Ovary (tissue), 10 donors: ENCODE measurements at regions of chr3 and their contacts with region 1.

Region 1: DNA sequence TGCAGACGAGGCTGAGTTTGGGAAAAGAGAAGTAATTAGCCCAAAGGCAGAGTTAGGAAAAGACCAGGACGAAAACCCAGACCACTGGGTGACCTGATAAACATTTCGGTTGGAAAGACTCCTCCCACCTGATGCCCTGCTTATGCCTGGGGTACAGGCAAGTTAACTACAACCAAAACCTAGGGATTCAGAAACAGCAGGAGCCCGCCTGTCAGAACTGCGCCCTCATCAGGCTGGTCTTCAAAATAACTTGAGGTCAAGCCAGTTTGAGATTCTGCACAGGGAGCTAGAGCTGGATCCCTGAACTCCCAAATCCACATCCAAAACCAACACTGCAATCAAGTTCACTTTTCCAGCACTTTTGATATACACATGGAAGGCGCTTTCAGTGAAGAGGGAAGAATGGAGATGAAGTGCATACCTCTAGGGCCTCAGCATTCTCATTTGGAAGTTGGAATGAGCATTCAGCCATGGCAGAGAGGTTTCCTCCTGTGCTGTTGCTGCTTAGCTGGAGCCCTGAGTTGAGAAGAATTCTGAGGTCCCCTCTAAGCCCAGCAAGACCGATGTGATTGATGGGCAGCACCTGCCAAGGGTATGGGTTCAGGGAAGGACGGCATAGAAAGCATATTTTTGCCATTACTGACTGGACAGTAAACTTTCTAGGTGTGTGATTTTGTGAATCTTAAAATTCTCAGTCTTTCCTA is 11.6 kb downstream of the TSEN2 start:
- DNase-seq: no peak
- H3K4me3 ChIP-seq: no peak overlapping the region
- H3K27ac ChIP-seq: no peak overlapping the region
- H3K4me1 ChIP-seq: no peaks in the 10 kb centered on the region
- H3K27me3 ChIP-seq: no peaks in the 10 kb centered on the region
- CTCF ChIP-seq: no peak
- EP300 ChIP-seq: no peak
- POLR2A ChIP-seq: no peak

Region 2: DNA sequence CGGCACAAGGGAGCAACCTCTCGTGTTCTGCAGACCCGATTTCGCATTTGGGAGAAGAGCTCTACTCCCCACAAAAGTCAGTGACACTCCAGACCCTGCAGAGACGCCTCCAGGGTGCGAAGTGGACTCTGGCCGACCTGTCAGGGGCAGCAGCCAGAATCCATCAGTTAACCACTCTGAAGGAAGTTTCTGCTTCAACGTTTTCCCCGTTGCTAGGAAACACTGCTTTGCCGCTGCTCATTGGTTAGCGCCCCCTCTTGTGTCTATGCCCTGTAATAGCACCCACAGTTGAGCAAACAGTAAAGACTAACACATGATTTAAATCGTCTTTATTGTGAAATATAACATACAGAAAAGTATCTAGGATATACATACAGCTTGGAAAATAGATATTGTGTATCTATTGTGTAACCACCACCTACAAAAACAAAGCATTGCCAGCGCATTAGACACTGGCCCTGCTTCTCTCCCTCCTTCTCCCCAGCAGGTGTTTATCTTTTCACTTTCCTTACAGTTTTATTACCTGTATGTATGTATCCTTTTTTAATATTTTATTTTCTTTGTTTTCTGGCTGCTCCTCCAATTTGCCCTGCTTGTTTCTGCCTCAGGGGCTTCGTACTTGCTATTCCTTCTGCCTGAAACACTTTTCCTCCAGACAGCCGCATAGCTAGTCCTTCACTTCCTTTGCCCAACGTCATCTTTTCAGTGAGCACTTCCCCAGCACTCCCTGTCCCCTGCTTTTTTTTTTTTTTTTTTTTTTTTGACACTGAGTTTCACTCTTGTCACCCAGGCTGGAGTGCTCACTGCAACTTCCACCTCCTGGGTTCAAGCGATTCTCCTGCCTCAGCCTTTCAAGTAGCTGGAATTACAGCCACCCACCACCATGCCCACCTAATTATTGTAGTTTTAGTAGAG is 224.3 kb after region 1 on chr3:
- intact Hi-C with region 1: loop called in 1 of 4 experiments (anchors 10 kb)
- DNase-seq: peak; percentile 69 to 85 (median 74)
- H3K4me3 ChIP-seq: peak overlapping the region; percentile 31
- H3K27ac ChIP-seq: no peak overlapping the region
- H3K4me1 ChIP-seq: no peaks in the 10 kb centered on the region
- H3K27me3 ChIP-seq: no peaks in the 10 kb centered on the region
- CTCF ChIP-seq: peak; percentile 87 to 89 (median 87)
- EP300 ChIP-seq: no peak
- POLR2A ChIP-seq: no peak

Region 3: GRCh38 chr3:13364602-13365271 is 868.8 kb after region 1 on chr3:
- intact Hi-C with region 1: no loop called
- DNase-seq: no peak
- H3K4me3 ChIP-seq: no peak overlapping the region
- H3K27ac ChIP-seq: no peak overlapping the region
- H3K4me1 ChIP-seq: no peaks in the 10 kb centered on the region
- H3K27me3 ChIP-seq: no peaks in the 10 kb centered on the region
- CTCF ChIP-seq: no peak
- EP300 ChIP-seq: no peak
- POLR2A ChIP-seq: no peak